ENCODE measurements at regions of chr20 and their contacts with region 1.

Region 1: GRCh38 chr20:9491324-9491723 is 23.1 kb upstream of the LAMP5 start:
- DNase-seq: no peak
- ATAC-seq: no peak
- H3K4me3 ChIP-seq: no peak overlapping the region
- H3K27ac ChIP-seq: no peak overlapping the region
- H3K4me1 ChIP-seq: no peaks in the 10 kb centered on the region
- H3K27me3 ChIP-seq: no peaks in the 10 kb centered on the region
- CTCF ChIP-seq: no peak
- POLR2A ChIP-seq: no peak

Region 2: DNA sequence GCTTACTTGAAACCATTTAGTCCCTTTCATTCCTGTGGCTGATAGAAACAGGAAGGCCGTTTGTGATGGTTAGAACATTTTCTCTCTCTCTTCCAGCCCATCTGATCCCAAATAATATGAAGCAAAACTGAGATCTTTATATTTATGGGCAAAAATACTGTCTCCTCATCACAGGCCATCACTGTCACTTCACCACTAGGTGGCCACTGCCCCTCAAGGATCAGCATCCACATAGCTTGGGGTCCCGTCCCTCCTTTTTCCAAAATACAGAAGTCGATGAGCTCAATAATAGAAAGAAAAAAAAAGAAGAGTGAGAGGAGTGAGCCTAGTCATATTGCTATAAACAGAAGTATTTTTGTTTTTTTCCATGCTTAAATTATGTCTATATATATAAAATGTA is 23.3 kb before region 1 on chr20:
- in situ Hi-C with region 1: no loop called
- intact Hi-C with region 1: loop called (anchors 1 kb)
- DNase-seq: no peak
- ATAC-seq: no peak
- H3K4me3 ChIP-seq: no peak overlapping the region
- H3K27ac ChIP-seq: no peak overlapping the region
- H3K4me1 ChIP-seq: no peaks in the 10 kb centered on the region
- H3K27me3 ChIP-seq: no peaks in the 10 kb centered on the region
- CTCF ChIP-seq: peak in 1 of 5 experiments; percentile 19
- POLR2A ChIP-seq: no peak

Region 3: GRCh38 chr20:9565910-9566550 is 74.7 kb after region 1 on chr20:
- in situ Hi-C with region 1: no loop called
- intact Hi-C with region 1: no loop called
- DNase-seq: no peak
- ATAC-seq: no peak
- H3K4me3 ChIP-seq: no peak overlapping the region
- H3K27ac ChIP-seq: no peak overlapping the region
- H3K4me1 ChIP-seq: no peaks in the 10 kb centered on the region
- H3K27me3 ChIP-seq: no peaks in the 10 kb centered on the region
- CTCF ChIP-seq: no peak
- POLR2A ChIP-seq: no peak

Measured in gastrocnemius medialis (tissue), 4 donors.